ENCODE measurements at regions of chr5 and their contacts with region 1.

Region 1: GRCh38 chr5:133111299-133111698 is 59.5 kb downstream of the HSPA4 start:
- DNase-seq: peak; percentile 62 to 84 (median 76)
- ATAC-seq: peak; percentile 81
- H3K4me3 ChIP-seq: no peak overlapping the region
- H3K4me3 Mint-ChIP-seq: peak overlapping the region in 5 of 10 donors; percentile 22 to 60 (median 51)
- H3K27ac ChIP-seq: no peak overlapping the region
- H3K27ac Mint-ChIP-seq: peak overlapping the region in 5 of 9 donors; percentile 3 to 85 (median 15)
- H3K4me1 ChIP-seq: peaks cover 0 to 10% of the 10 kb centered on the region in 2 donors
- H3K4me1 Mint-ChIP-seq: peaks cover 17 to 33% (median 26%) of the 10 kb centered on the region in 7 donors
- H3K27me3 ChIP-seq: no peaks in the 10 kb centered on the region
- H3K27me3 Mint-ChIP-seq: peaks cover 0 to 6% (median 0%) of the 10 kb centered on the region in 5 donors

Region 2: DNA sequence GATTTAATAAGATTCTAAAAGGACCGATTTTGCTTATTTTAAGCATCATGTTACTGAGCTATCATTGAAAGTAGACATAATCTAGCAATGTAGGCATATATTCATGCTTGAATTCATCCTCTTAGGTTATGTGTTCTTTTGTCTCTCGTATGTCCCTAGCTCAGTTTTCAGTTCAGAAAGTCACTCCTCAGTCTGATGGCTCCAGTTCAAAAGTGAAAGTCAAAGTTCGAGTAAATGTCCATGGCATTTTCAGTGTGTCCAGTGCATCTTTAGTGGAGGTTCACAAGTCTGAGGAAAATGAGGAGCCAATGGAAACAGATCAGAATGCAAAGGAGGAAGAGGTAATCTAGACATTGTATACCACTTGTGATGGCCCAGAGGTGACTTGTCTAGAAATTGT is 20.3 kb before region 1 on chr5:
- CTCF ChIA-PET with region 1: no interaction called
- POLR2A ChIA-PET with region 1: no interaction called
- intact Hi-C with region 1: no loop called
- DNase-seq: no peak
- ATAC-seq: no peak
- H3K4me3 ChIP-seq: no peak overlapping the region
- H3K4me3 Mint-ChIP-seq: no peak overlapping the region
- H3K27ac ChIP-seq: no peak overlapping the region
- H3K27ac Mint-ChIP-seq: peak overlapping the region in 2 of 9 donors; percentile 2 to 9
- H3K4me1 ChIP-seq: no peaks in the 10 kb centered on the region
- H3K4me1 Mint-ChIP-seq: peaks cover 0 to 5% (median 0%) of the 10 kb centered on the region in 7 donors
- H3K27me3 ChIP-seq: no peaks in the 10 kb centered on the region
- H3K27me3 Mint-ChIP-seq: no peaks in the 10 kb centered on the region

Region 3: GRCh38 chr5:133219296-133219695 is 108.0 kb after region 1 on chr5:
- CTCF ChIA-PET with region 1: interaction called, 12 read pairs
- POLR2A ChIA-PET with region 1: no interaction called
- intact Hi-C with region 1: loop called (anchors 1 to 2 kb)
- DNase-seq: peak in 1 of 9 donors; percentile 9
- ATAC-seq: no peak
- H3K4me3 ChIP-seq: no peak overlapping the region
- H3K4me3 Mint-ChIP-seq: no peak overlapping the region
- H3K27ac ChIP-seq: no peak overlapping the region
- H3K27ac Mint-ChIP-seq: no peak overlapping the region
- H3K4me1 ChIP-seq: no peaks in the 10 kb centered on the region
- H3K4me1 Mint-ChIP-seq: no peaks in the 10 kb centered on the region
- H3K27me3 ChIP-seq: no peaks in the 10 kb centered on the region
- H3K27me3 Mint-ChIP-seq: no peaks in the 10 kb centered on the region

Region 4: DNA sequence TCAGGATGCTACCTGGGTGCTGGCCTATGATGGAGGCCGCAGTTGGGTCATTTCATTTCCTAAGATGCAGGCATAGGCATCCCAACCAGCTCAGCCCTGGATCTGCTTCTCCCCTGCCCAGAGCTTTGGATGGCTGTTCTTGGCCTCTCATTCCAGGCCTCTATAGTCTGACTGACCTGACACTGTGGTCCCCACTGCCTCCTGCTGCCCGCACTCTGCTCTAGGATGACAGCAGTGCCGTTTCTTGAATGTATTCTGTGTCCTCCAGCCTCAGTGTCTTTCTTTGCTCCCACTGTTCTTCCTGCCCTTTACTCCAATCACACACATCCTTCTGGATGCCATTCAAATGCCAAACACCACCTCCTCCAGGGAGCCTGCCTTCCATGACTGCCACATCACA is 176.2 kb after region 1 on chr5:
- CTCF ChIA-PET with region 1: no interaction called
- POLR2A ChIA-PET with region 1: no interaction called
- intact Hi-C with region 1: loop called in 1 of 2 experiments (anchors 1 kb)
- DNase-seq: peak in 6 of 9 donors; percentile 11 to 49 (median 26)
- ATAC-seq: peak; percentile 37
- H3K4me3 ChIP-seq: no peak overlapping the region
- H3K4me3 Mint-ChIP-seq: no peak overlapping the region
- H3K27ac ChIP-seq: no peak overlapping the region
- H3K27ac Mint-ChIP-seq: peak overlapping the region in 1 of 9 donors; percentile 13
- H3K4me1 ChIP-seq: no peaks in the 10 kb centered on the region
- H3K4me1 Mint-ChIP-seq: no peaks in the 10 kb centered on the region
- H3K27me3 ChIP-seq: no peaks in the 10 kb centered on the region
- H3K27me3 Mint-ChIP-seq: no peaks in the 10 kb centered on the region

Region 5: DNA sequence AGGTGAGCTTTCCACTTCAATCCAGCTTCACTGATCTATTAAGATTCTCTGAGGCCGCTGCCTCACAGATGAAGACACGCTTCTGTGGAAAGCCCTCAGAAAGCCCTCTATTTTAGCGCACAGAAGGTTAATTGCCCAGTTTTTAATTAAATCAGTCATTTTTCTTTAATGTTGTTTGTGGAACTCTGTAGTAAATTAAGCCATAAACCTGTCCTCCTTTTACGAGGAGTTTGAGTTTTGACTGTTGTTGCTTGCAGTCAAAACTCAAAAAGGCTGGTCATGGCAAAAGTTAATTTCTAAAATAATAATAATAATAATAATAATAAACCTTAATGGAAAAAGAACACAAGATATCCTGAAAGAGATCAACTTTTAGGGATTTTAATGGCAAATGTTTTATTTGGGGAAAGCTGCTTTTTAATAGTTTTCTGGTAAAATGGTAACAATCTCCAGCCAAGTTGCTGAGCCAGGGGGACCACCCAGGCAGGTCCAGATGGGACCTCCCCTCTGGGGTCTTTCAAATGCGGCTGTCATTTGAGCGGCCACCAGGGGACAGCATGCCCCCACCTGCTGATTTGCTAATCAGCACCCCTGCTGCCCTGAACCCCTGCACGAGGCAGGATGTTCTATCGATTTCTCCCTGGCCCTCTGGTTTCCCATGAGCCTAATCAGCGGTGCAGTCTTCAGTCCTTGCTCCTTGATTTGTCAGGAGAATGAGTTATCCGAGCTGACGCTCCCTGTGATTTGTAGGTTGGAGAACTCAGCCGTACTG is 253.8 kb after region 1 on chr5:
- CTCF ChIA-PET with region 1: no interaction called
- POLR2A ChIA-PET with region 1: no interaction called
- intact Hi-C with region 1: loop called (anchors 1 to 5 kb)
- DNase-seq: no peak
- ATAC-seq: no peak
- H3K4me3 ChIP-seq: no peak overlapping the region
- H3K4me3 Mint-ChIP-seq: no peak overlapping the region
- H3K27ac ChIP-seq: no peak overlapping the region
- H3K27ac Mint-ChIP-seq: no peak overlapping the region
- H3K4me1 ChIP-seq: no peaks in the 10 kb centered on the region
- H3K4me1 Mint-ChIP-seq: peaks cover 0 to 2% (median 0%) of the 10 kb centered on the region in 7 donors
- H3K27me3 ChIP-seq: no peaks in the 10 kb centered on the region
- H3K27me3 Mint-ChIP-seq: peaks cover 0 to 16% (median 7%) of the 10 kb centered on the region in 5 donors

Region 6: DNA sequence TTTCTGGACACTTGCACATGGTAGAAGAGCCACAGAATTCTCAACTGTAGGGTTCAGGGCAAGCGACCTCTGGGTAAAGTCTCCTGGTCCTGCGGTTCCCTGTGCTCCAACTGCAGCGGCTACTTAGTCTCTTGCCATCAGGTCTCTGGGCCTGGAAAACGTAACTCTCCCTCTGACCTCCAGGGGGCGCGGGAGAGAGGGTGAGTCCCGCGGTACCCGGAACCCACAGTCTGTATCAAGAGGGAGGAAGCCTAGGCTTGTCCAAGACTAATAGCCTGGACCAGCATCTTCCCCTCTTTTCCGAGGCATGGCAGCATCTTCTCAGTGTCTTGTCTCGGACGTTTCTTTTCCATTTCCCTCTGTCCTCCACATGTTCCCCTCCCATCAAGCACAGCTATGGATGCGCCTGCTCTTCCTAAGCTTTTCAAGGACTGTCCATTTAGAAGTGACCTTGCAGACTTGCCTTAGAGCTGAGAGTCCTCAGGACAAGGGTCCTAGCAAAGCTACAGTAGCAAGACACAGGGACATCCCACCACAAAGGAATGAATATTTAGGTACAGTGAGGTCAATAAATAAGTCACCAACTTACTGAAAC is 441.7 kb after region 1 on chr5:
- CTCF ChIA-PET with region 1: no interaction called
- POLR2A ChIA-PET with region 1: no interaction called
- intact Hi-C with region 1: loop called in 1 of 2 experiments (anchors 10 kb)
- DNase-seq: peak; percentile 20 to 65 (median 32)
- ATAC-seq: peak; percentile 70
- H3K4me3 ChIP-seq: no peak overlapping the region
- H3K4me3 Mint-ChIP-seq: no peak overlapping the region
- H3K27ac ChIP-seq: no peak overlapping the region
- H3K27ac Mint-ChIP-seq: no peak overlapping the region
- H3K4me1 ChIP-seq: no peaks in the 10 kb centered on the region
- H3K4me1 Mint-ChIP-seq: peaks cover 0 to 3% (median 0%) of the 10 kb centered on the region in 7 donors
- H3K27me3 ChIP-seq: no peaks in the 10 kb centered on the region
- H3K27me3 Mint-ChIP-seq: peaks cover 24 to 57% (median 43%) of the 10 kb centered on the region in 5 donors

Region 7: GRCh38 chr5:133868946-133869518 is 757.7 kb after region 1 on chr5:
- CTCF ChIA-PET with region 1: interaction called, 7 read pairs
- POLR2A ChIA-PET with region 1: no interaction called
- intact Hi-C with region 1: loop called in 1 of 2 experiments (anchors 1 kb)
- DNase-seq: peak; percentile 42 to 70 (median 62)
- ATAC-seq: peak; percentile 67
- H3K4me3 ChIP-seq: no peak overlapping the region
- H3K4me3 Mint-ChIP-seq: peak overlapping the region in 4 of 10 donors; percentile 4 to 33 (median 20)
- H3K27ac ChIP-seq: no peak overlapping the region
- H3K27ac Mint-ChIP-seq: peak overlapping the region in 1 of 9 donors; percentile 25
- H3K4me1 ChIP-seq: no peaks in the 10 kb centered on the region
- H3K4me1 Mint-ChIP-seq: peaks cover 0 to 19% (median 6%) of the 10 kb centered on the region in 7 donors
- H3K27me3 ChIP-seq: no peaks in the 10 kb centered on the region
- H3K27me3 Mint-ChIP-seq: peaks cover 0 to 31% (median 3%) of the 10 kb centered on the region in 5 donors

Region 8: GRCh38 chr5:133980652-133981051 is 869.4 kb after region 1 on chr5:
- CTCF ChIA-PET with region 1: no interaction called
- POLR2A ChIA-PET with region 1: no interaction called
- intact Hi-C with region 1: loop called in 1 of 2 experiments (anchors 1 kb)
- DNase-seq: no peak
- ATAC-seq: no peak
- H3K4me3 ChIP-seq: no peak overlapping the region
- H3K4me3 Mint-ChIP-seq: no peak overlapping the region
- H3K27ac ChIP-seq: no peak overlapping the region
- H3K27ac Mint-ChIP-seq: peak overlapping the region in 1 of 9 donors; percentile 17
- H3K4me1 ChIP-seq: no peaks in the 10 kb centered on the region
- H3K4me1 Mint-ChIP-seq: peaks cover 0 to 20% (median 0%) of the 10 kb centered on the region in 7 donors
- H3K27me3 ChIP-seq: no peaks in the 10 kb centered on the region
- H3K27me3 Mint-ChIP-seq: no peaks in the 10 kb centered on the region

Measured in naive thymus-derived CD4-positive, alpha-beta T cell (primary cell).